ENCODE measurements at regions of chr5 and their contacts with region 1.

Region 1: GRCh38 chr5:140329739-140330481 is 16.5 kb downstream of the HBEGF start:
- DNase-seq: no peak
- ATAC-seq: no peak
- H3K4me3 Mint-ChIP-seq: no peak overlapping the region
- H3K27ac Mint-ChIP-seq: no peak overlapping the region
- H3K4me1 Mint-ChIP-seq: no peaks in the 10 kb centered on the region
- H3K27me3 Mint-ChIP-seq: no peaks in the 10 kb centered on the region
- CTCF ChIP-seq: no peak

Region 2: DNA sequence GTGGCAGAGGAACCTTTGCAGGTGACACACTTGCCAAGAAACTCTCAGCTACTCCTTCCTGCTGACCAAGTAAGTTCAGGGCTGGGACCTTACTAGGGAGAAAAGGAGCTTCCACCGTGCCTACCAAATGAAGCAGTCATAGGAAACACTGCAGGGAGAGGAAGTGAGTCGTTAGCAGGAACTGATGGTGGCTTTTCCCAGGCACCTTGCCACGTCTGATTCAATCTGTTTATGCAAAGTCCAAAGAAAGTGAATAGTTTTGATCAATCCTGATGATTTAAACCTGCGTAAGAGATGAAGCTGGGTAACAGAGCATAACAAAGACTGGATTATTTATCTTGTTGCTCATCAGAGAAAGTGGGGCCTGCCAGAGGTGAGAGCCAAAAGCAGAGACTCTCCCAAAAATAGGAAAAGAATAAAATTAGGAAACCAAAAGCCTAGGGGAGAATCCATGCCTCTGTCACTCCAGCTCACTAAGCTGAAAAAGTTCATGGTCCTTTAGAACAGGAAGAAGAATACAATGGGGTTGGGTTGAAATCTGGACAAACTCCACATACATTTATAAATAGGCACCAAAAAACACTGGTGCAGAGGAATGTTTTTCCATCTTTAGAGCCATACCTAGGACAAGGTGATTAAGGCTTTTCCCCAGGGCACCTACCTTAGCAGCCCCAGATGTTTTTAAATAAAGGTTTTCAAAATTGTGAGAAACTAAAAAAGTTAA is 17.7 kb before region 1 on chr5:
- CTCF ChIA-PET with region 1: no interaction called
- POLR2A ChIA-PET with region 1: interaction called, 11 read pairs
- intact Hi-C with region 1: no loop called
- DNase-seq: no peak
- ATAC-seq: no peak
- H3K4me3 Mint-ChIP-seq: no peak overlapping the region
- H3K27ac Mint-ChIP-seq: no peak overlapping the region
- H3K4me1 Mint-ChIP-seq: no peaks in the 10 kb centered on the region
- H3K27me3 Mint-ChIP-seq: peaks cover 5% of the 10 kb centered on the region
- CTCF ChIP-seq: no peak

Measured in activated B cell treated with CpG ODN at 0.5 μM for 24 hours (primary cell).